Endothelial cell of umbilical vein (primary cell): ENCODE measurements at regions of chr16 and their contacts with region 1.

Region 1: GRCh38 chr16:23504451-23505179 is 5.7 kb downstream of the GGA2 start:
- DNase-seq: peak; percentile 87
- H3K4me3 ChIP-seq: no peak overlapping the region
- H3K27ac ChIP-seq: peak overlapping the region; percentile 64
- H3K4me1 ChIP-seq: peaks cover 20% of the 10 kb centered on the region
- H3K27me3 ChIP-seq: no peaks in the 10 kb centered on the region
- CTCF ChIP-seq: no peak
- POLR2A ChIP-seq: no peak

Region 2: DNA sequence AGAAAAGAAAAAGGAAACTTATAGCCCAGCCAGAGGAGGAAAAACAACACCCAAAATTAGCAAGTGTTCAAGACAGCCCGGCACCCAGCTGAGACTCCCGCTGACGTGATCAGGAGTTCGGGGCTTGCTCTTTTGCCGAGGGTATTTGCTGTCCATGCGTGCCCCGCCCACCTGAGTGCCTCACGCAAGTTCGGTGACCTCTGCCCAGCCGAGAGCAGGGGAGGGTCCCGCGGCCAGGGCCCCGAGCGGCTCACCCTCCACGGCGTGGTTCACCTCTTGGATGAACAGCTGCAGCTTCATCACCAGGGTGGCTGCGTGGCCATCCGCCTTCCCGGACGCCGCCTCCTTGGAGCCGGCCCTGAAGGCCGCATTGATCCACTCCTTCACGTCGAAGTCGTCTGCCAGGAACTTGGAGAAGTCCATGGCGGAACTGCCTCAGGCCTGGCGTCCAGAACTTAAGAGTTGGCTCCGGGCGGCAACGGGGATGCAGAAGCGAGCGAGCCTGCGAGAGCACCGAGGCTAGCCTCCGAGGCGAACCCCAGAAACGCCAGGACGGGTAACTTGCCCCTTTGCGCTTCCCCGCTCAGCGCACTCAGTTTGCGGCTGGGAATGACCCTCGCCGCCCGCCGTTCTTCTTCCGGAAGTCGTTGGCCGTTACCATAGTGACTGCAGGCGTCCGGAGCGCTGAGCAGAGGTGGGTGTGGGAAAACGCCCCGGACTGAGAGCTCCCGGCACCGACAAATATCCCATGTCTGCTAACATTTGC is 51.9 kb before region 1 on chr16 and contains the start of gene COG7:
- CTCF ChIA-PET with region 1: no interaction called
- POLR2A ChIA-PET with region 1: no interaction called
- dilution Hi-C with region 1: no loop called
- intact Hi-C with region 1: loop called (anchors 2 kb)
- DNase-seq: peak; percentile 95
- H3K4me3 ChIP-seq: peak within 1 kb of the TSS; percentile 65 to 79 (median 70)
- H3K27ac ChIP-seq: peak within 1 kb of the TSS; percentile 37
- H3K4me1 ChIP-seq: peaks cover 3% of the 10 kb centered on the region
- H3K27me3 ChIP-seq: no peaks in the 10 kb centered on the region
- CTCF ChIP-seq: no peak
- POLR2A ChIP-seq: peak; percentile 22
- total RNA-seq, gene COG7: 20.7 and 24.1 TPM in 2 replicates